Natural killer cell (primary cell): ENCODE measurements at regions of chr12 and their contacts with region 1.

Region 1: GRCh38 chr12:6470375-6471163 is at the start of gene VAMP1:
- DNase-seq: peak; percentile 95 to 97
- ATAC-seq: peak; percentile 91 to 97 (median 91)
- H3K4me3 ChIP-seq: peak within 1 kb of the TSS; percentile 94
- H3K4me3 Mint-ChIP-seq: peak within 1 kb of the TSS; percentile 93
- H3K27ac ChIP-seq: peak within 1 kb of the TSS; percentile 94
- H3K27ac Mint-ChIP-seq: peak within 1 kb of the TSS; percentile 95 to 97
- H3K4me1 ChIP-seq: peaks cover 26% of the 10 kb centered on the region
- H3K4me1 Mint-ChIP-seq: peaks cover 39 to 53% of the 10 kb centered on the region in 2 donors
- H3K27me3 ChIP-seq: no peaks in the 10 kb centered on the region
- H3K27me3 Mint-ChIP-seq: no peaks in the 10 kb centered on the region
- CTCF ChIP-seq: no peak
- total RNA-seq, gene VAMP1: 81.0 to 84.3 (median 83.8) TPM

Region 2: GRCh38 chr12:6423267-6424007 is 47.1 kb before region 1 on chr12:
- intact Hi-C with region 1: loop called (anchors 1 kb)
- DNase-seq: peak; percentile 61 to 95
- ATAC-seq: peak; percentile 91 to 96 (median 93)
- H3K4me3 ChIP-seq: no peak overlapping the region
- H3K4me3 Mint-ChIP-seq: no peak overlapping the region
- H3K27ac ChIP-seq: no peak overlapping the region
- H3K27ac Mint-ChIP-seq: peak overlapping the region in 1 of 2 donors; percentile 68
- H3K4me1 ChIP-seq: peaks cover 32% of the 10 kb centered on the region
- H3K4me1 Mint-ChIP-seq: peaks cover 0 to 26% of the 10 kb centered on the region in 2 donors
- H3K27me3 ChIP-seq: no peaks in the 10 kb centered on the region
- H3K27me3 Mint-ChIP-seq: no peaks in the 10 kb centered on the region
- CTCF ChIP-seq: peak; percentile 79

Region 3: DNA sequence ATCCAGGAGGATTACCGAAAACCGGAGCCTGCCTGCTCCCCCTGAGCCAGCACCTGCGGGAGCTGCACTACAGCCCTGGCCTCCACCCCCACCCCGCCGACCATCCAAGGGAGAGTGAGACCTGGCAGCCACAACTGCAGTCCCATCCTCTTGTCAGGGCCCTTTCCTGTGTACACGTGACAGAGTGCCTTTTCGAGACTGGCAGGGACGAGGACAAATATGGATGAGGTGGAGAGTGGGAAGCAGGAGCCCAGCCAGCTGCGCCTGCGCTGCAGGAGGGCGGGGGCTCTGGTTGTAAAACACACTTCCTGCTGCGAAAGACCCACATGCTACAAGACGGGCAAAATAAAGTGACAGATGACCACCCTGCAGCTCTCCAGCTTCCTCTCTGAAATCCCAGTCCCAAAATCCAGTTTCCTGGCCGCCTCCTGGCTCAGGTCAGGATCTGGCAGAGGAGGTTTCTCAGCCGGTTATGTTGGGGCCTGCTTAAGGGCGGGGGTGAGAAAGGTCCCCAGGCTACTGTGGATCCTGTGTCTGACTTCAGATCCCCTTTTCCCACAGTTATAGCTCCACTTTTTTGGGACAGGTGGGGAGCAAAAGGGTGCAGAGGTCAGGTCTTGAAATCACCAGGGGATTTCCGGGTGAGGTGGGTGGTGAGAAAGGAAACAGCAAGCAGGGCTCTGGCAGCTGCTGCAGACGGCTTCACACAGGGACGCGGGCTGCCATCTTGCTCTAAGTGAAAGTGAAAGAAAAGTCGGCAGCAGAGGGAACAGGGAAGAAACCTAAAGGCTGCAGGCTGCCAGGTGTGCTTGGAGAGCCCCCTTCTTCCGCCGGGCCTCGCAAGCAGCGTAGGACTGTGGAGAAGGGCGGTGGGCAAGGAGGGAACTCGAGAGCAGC is 19.0 kb before region 1 on chr12 and contains the start of gene TAPBPL:
- intact Hi-C with region 1: loop called (anchors 1 kb)
- DNase-seq: peak; percentile 73 to 95
- ATAC-seq: peak; percentile 88 to 95 (median 94)
- H3K4me3 ChIP-seq: peak within 1 kb of the TSS; percentile 89
- H3K4me3 Mint-ChIP-seq: peak within 1 kb of the TSS; percentile 100
- H3K27ac ChIP-seq: peak within 1 kb of the TSS; percentile 98
- H3K27ac Mint-ChIP-seq: peak within 1 kb of the TSS; percentile 100
- H3K4me1 ChIP-seq: peaks cover 52% of the 10 kb centered on the region
- H3K4me1 Mint-ChIP-seq: peaks cover 33 to 46% of the 10 kb centered on the region in 2 donors
- H3K27me3 ChIP-seq: no peaks in the 10 kb centered on the region
- H3K27me3 Mint-ChIP-seq: no peaks in the 10 kb centered on the region
- CTCF ChIP-seq: no peak
- total RNA-seq, gene TAPBPL: 43.0 to 51.4 (median 46.9) TPM

Region 4: DNA sequence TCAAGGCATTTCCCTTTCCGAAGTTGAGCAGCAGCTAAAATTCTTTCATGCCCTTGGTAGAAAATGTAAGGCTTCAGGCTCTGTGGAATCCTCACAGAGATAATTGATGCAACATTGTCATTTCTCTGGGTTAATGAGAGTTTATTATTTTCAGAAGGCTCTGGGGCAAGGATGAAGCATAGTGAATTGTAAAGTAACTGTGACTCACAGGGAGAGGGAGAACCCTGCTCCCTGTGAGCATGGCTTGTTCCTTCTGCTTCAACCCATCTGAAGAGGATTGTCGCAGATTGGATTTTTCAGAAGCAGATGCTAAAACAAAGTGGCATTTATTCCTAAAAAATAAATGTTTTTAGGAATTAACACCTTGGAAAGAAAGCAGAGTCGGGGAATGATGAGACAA is 1153.9 kb after region 1 on chr12:
- intact Hi-C with region 1: no loop called
- DNase-seq: no peak
- ATAC-seq: no peak
- H3K4me3 ChIP-seq: no peak overlapping the region
- H3K4me3 Mint-ChIP-seq: no peak overlapping the region
- H3K27ac ChIP-seq: no peak overlapping the region
- H3K27ac Mint-ChIP-seq: no peak overlapping the region
- H3K4me1 ChIP-seq: no peaks in the 10 kb centered on the region
- H3K4me1 Mint-ChIP-seq: no peaks in the 10 kb centered on the region
- H3K27me3 ChIP-seq: peaks cover 4% of the 10 kb centered on the region
- H3K27me3 Mint-ChIP-seq: peaks cover 20 to 58% of the 10 kb centered on the region in 2 donors
- CTCF ChIP-seq: no peak